ENCODE measurements at regions of chr12 and their contacts with region 1.

Region 1: GRCh38 chr12:51341259-51342007 is 5.0 kb downstream of the CELA1 start:
- DNase-seq: no peak
- H3K4me3 ChIP-seq: peak overlapping the region in 3 of 4 donors; percentile 3 to 38 (median 35)
- H3K27ac ChIP-seq: no peak overlapping the region
- H3K4me1 ChIP-seq: peaks cover 5 to 8% (median 7%) of the 10 kb centered on the region in 4 donors
- H3K27me3 ChIP-seq: no peaks in the 10 kb centered on the region
- CTCF ChIP-seq: peak; percentile 93 to 98 (median 96)
- EP300 ChIP-seq: no peak
- POLR2A ChIP-seq: no peak

Region 2: GRCh38 chr12:50916292-50916691 is 425.1 kb before region 1 on chr12:
- intact Hi-C with region 1: no loop called
- DNase-seq: no peak
- H3K4me3 ChIP-seq: no peak overlapping the region
- H3K27ac ChIP-seq: no peak overlapping the region
- H3K4me1 ChIP-seq: peaks cover 0 to 4% (median under 1%) of the 10 kb centered on the region in 4 donors
- H3K27me3 ChIP-seq: no peaks in the 10 kb centered on the region
- CTCF ChIP-seq: no peak
- EP300 ChIP-seq: no peak
- POLR2A ChIP-seq: no peak

Region 3: DNA sequence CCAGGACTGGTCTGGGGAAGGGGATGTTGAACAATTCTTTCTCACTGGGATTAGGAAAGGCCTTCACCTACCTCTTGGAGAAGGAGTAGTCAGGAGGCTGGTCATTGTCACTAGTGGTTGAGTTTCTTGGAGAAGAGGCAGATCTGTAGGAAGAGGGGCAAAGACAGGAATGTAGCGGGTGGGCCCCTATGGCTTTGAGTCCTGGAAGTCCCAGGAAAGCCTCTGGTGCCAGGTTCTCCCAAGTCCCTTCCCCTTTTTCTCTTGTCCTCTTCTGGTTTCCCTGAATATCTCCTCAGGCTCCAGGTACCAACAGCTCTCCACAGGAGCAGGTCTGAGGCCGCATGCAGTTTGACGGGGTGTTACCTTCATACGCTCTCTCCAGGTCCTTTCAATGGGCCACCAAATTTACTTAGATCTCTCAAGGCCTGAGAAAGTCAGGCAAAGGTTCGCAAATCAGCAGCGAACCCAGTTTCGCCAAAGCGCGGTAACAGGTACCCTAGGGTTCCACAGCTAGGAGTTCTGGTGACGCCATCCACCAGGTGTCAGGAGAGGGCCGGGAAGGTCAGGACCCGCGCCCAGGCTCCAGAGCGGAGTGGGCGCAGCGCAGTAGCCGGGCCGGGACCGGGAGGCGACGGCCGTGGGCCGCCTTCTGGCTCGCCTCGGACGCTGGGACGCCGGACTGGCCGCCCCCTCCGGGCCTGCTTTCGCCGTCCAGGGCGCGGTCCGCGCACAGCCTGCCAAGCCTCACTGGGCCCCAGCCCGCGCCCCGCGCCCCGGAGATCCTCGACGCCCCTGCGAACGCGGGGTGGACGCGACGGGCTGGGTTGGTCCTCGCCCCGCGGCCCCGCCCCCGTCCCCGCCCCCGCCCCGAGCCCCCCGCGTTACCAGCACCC is 72.0 kb before region 1 on chr12:
- intact Hi-C with region 1: loop called (anchors 5 kb)
- DNase-seq: no peak
- H3K4me3 ChIP-seq: peak overlapping the region; percentile 76 to 81 (median 77)
- H3K27ac ChIP-seq: peak overlapping the region; percentile 42 to 69 (median 63)
- H3K4me1 ChIP-seq: peaks cover 0 to 23% (median 21%) of the 10 kb centered on the region in 4 donors
- H3K27me3 ChIP-seq: peaks cover 0 to 46% (median 6%) of the 10 kb centered on the region in 4 donors
- CTCF ChIP-seq: peak in 2 of 3 experiments; percentile 16 to 25
- EP300 ChIP-seq: no peak
- POLR2A ChIP-seq: no peak

Region 4: GRCh38 chr12:52063981-52064649 is 722.7 kb after region 1 on chr12:
- intact Hi-C with region 1: no loop called
- DNase-seq: no peak
- H3K4me3 ChIP-seq: no peak overlapping the region
- H3K27ac ChIP-seq: peak overlapping the region; percentile 54 to 76 (median 66)
- H3K4me1 ChIP-seq: peaks cover 10 to 39% (median 29%) of the 10 kb centered on the region in 4 donors
- H3K27me3 ChIP-seq: no peaks in the 10 kb centered on the region
- CTCF ChIP-seq: no peak
- EP300 ChIP-seq: no peak
- POLR2A ChIP-seq: no peak